ENCODE measurements at regions of chr3 and their contacts with region 1.

Region 1: DNA sequence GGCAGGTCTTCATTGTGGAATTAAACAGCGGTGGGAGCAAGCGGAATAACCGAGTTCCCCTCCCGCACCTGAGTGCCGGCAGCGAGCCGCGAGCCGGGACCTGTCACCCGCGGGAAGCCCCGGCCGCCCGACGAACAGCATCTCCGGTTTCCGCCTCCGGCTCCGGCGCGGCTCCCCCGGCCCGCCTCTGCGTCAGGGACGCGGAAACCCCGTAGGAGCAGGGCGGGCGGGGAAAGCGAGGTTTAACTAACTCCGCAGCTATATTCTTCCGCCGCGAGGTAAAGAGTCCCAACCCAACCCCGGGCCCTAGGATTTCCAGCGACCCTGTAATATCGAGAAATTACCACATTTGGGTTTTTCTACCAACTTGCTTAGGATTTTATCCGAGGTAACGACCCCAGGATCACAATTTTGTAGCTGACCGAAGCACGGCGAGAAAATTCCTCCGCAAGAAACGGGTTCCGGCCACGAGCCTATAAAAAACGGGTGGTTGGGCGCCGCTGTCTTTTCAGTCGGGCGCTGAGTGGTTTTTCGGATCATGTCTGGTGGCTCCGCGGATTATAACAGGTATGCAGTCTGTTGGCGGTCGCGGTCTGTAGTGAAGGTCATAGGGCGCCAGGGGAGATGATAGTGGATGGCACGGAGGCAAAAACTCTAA is at the start of gene EIF4A2:
- DNase-seq: peak; percentile 84 to 96 (median 89)
- ATAC-seq: peak; percentile 68
- H3K4me3 ChIP-seq: peak within 1 kb of the TSS; percentile 92
- H3K4me3 Mint-ChIP-seq: peak within 1 kb of the TSS; percentile 95
- H3K27ac ChIP-seq: peak within 1 kb of the TSS; percentile 96 to 99
- H3K27ac Mint-ChIP-seq: peak within 1 kb of the TSS; percentile 96
- H3K4me1 ChIP-seq: peaks cover 32% of the 10 kb centered on the region
- H3K4me1 Mint-ChIP-seq: peaks cover 59% of the 10 kb centered on the region
- H3K27me3 ChIP-seq: no peaks in the 10 kb centered on the region
- H3K27me3 Mint-ChIP-seq: peaks cover 5% of the 10 kb centered on the region
- CTCF ChIP-seq: no peak
- total RNA-seq, gene EIF4A2: 1,039 to 1,046 TPM

Region 2: GRCh38 chr3:185021256-185021655 is 1761.9 kb before region 1 on chr3:
- CTCF ChIA-PET with region 1: no interaction called
- POLR2A ChIA-PET with region 1: no interaction called
- intact Hi-C with region 1: no loop called
- DNase-seq: no peak
- ATAC-seq: no peak
- H3K4me3 ChIP-seq: no peak overlapping the region
- H3K4me3 Mint-ChIP-seq: no peak overlapping the region
- H3K27ac ChIP-seq: no peak overlapping the region
- H3K27ac Mint-ChIP-seq: no peak overlapping the region
- H3K4me1 ChIP-seq: no peaks in the 10 kb centered on the region
- H3K4me1 Mint-ChIP-seq: no peaks in the 10 kb centered on the region
- H3K27me3 ChIP-seq: no peaks in the 10 kb centered on the region
- H3K27me3 Mint-ChIP-seq: no peaks in the 10 kb centered on the region
- CTCF ChIP-seq: no peak

Region 3: GRCh38 chr3:185645596-185646381 is 1137.4 kb before region 1 on chr3:
- CTCF ChIA-PET with region 1: no interaction called
- POLR2A ChIA-PET with region 1: no interaction called
- intact Hi-C with region 1: no loop called
- DNase-seq: no peak
- ATAC-seq: no peak
- H3K4me3 ChIP-seq: no peak overlapping the region
- H3K4me3 Mint-ChIP-seq: no peak overlapping the region
- H3K27ac ChIP-seq: no peak overlapping the region
- H3K27ac Mint-ChIP-seq: no peak overlapping the region
- H3K4me1 ChIP-seq: no peaks in the 10 kb centered on the region
- H3K4me1 Mint-ChIP-seq: no peaks in the 10 kb centered on the region
- H3K27me3 ChIP-seq: no peaks in the 10 kb centered on the region
- H3K27me3 Mint-ChIP-seq: peaks cover 20% of the 10 kb centered on the region
- CTCF ChIP-seq: no peak

Region 4: GRCh38 chr3:186570096-186570940 is 212.9 kb before region 1 on chr3 and contains the start of gene DNAJB11:
- CTCF ChIA-PET with region 1: no interaction called
- POLR2A ChIA-PET with region 1: interaction called, 58 read pairs
- intact Hi-C with region 1: loop called (anchors 2 kb)
- DNase-seq: peak; percentile 91 to 100 (median 97)
- ATAC-seq: peak; percentile 83
- H3K4me3 ChIP-seq: peak within 1 kb of the TSS; percentile 79
- H3K4me3 Mint-ChIP-seq: peak within 1 kb of the TSS; percentile 99
- H3K27ac ChIP-seq: peak within 1 kb of the TSS; percentile 90 to 94
- H3K27ac Mint-ChIP-seq: peak within 1 kb of the TSS; percentile 94
- H3K4me1 ChIP-seq: peaks cover 37% of the 10 kb centered on the region
- H3K4me1 Mint-ChIP-seq: peaks cover 69% of the 10 kb centered on the region
- H3K27me3 ChIP-seq: no peaks in the 10 kb centered on the region
- H3K27me3 Mint-ChIP-seq: no peaks in the 10 kb centered on the region
- CTCF ChIP-seq: no peak
- total RNA-seq, gene DNAJB11: 69.3 to 70.3 TPM

Region 5: DNA sequence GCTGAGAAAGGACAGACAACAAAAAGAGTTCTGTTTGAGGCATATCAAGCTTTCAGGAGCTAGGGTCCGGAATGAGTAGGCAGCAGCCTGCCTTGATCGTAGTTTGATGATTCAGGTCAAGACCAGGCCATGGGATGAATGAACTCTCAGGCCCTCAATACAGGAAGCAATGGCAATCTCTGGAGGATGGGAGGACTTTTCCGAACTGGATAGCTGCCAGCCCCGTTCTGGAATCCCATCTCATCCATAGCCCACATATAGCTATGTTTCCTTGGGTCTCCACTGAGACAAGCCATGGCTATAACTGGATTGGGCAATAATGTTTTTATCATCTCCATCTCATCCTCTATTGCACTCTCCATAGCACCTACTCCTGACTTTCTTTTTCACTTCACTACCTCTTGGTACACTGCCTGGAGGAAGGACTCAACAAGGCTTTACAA is 157.6 kb before region 1 on chr3:
- CTCF ChIA-PET with region 1: no interaction called
- POLR2A ChIA-PET with region 1: no interaction called
- intact Hi-C with region 1: no loop called
- DNase-seq: no peak
- ATAC-seq: no peak
- H3K4me3 ChIP-seq: no peak overlapping the region
- H3K4me3 Mint-ChIP-seq: no peak overlapping the region
- H3K27ac ChIP-seq: no peak overlapping the region
- H3K27ac Mint-ChIP-seq: no peak overlapping the region
- H3K4me1 ChIP-seq: no peaks in the 10 kb centered on the region
- H3K4me1 Mint-ChIP-seq: no peaks in the 10 kb centered on the region
- H3K27me3 ChIP-seq: peaks cover 0 to 4% of the 10 kb centered on the region in 2 experiments
- H3K27me3 Mint-ChIP-seq: peaks cover 25% of the 10 kb centered on the region
- CTCF ChIP-seq: no peak

Region 6: DNA sequence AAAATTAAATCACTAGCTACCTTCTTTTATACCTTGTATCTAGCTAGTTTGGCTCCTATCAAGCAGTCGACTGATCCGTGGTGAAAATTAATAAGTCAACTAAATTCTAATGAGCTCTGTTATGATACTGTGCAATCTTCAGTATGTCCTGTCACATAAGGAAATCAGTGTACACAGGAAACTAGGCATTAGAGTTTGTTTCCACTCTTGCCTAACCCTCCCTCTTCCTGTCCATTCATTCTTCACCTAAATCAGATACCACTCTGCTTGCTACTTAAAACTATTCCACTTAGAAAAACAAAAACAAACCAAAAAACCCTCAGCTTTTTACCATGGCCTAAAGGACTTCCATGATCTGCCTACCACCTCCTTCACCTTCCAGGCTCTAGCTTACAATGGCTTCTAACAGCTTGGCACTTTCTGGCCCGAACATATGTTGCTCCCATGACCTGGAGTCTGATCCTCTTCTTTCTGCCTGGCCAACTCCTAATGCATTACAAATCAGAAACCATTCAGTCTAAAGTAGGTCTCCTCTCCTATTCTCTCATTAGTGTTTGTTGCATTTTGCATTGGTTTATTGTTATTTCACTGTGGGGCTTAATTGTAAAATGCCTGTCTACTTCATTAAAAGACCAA is 15.2 kb after region 1 on chr3:
- CTCF ChIA-PET with region 1: interaction called, 3 read pairs
- POLR2A ChIA-PET with region 1: interaction called, 40 read pairs
- intact Hi-C with region 1: no loop called
- DNase-seq: no peak
- ATAC-seq: no peak
- H3K4me3 ChIP-seq: no peak overlapping the region
- H3K4me3 Mint-ChIP-seq: no peak overlapping the region
- H3K27ac ChIP-seq: no peak overlapping the region
- H3K27ac Mint-ChIP-seq: no peak overlapping the region
- H3K4me1 ChIP-seq: peaks cover 5% of the 10 kb centered on the region
- H3K4me1 Mint-ChIP-seq: peaks cover 16% of the 10 kb centered on the region
- H3K27me3 ChIP-seq: no peaks in the 10 kb centered on the region
- H3K27me3 Mint-ChIP-seq: no peaks in the 10 kb centered on the region
- CTCF ChIP-seq: no peak

Region 7: DNA sequence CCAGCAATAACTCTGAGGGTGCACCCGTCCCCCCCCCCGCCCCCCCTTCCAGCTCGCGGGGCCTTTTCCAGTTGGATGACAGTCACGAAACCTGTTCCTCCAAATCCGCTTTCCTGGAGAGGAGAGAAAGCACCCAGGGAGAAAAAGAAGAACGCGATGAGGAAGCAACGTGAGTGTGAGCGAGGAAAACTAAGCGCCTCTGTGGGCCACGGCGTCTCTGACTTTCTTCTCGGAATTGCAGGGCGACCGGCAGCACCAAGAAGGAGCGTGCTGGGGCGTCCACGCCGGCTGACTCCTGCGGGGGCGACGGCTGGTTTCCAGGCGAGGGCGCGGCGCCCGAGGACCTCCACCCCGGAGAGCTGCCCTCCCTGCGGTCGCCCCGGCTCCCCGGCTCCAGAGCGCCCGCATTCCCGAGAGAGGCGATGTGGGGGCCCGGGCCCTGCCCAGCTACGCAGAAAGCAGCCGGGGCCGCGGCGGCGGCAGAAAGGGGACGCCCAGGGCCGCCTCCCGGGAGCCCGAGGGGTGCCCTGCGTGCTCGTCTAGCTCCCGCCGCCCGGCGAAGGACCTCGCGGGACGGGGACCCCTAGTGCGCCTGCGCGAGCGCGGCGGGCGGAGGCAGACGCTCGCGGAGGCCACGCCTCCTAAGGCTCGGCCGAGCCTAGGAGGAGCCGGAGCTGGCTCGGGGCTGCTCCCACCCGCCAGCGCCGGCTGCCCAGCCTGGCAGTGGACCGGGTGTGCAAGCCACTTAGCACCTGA is 44.0 kb after region 1 on chr3:
- CTCF ChIA-PET with region 1: interaction called, 3 read pairs
- POLR2A ChIA-PET with region 1: interaction called, 69 read pairs
- intact Hi-C with region 1: loop called in 1 of 2 experiments (anchors 5 kb)
- DNase-seq: peak; percentile 68 to 96 (median 82)
- ATAC-seq: peak; percentile 92
- H3K4me3 ChIP-seq: peak overlapping the region; percentile 60
- H3K4me3 Mint-ChIP-seq: peak overlapping the region; percentile 76
- H3K27ac ChIP-seq: no peak overlapping the region
- H3K27ac Mint-ChIP-seq: no peak overlapping the region
- H3K4me1 ChIP-seq: peaks cover 27% of the 10 kb centered on the region
- H3K4me1 Mint-ChIP-seq: peaks cover 23% of the 10 kb centered on the region
- H3K27me3 ChIP-seq: peaks cover 37 to 65% of the 10 kb centered on the region in 2 experiments
- H3K27me3 Mint-ChIP-seq: peaks cover 65% of the 10 kb centered on the region
- CTCF ChIP-seq: no peak

Region 8: GRCh38 chr3:186920301-186920700 is 137.1 kb after region 1 on chr3:
- CTCF ChIA-PET with region 1: no interaction called
- POLR2A ChIA-PET with region 1: no interaction called
- intact Hi-C with region 1: no loop called
- DNase-seq: no peak
- ATAC-seq: no peak
- H3K4me3 ChIP-seq: no peak overlapping the region
- H3K4me3 Mint-ChIP-seq: no peak overlapping the region
- H3K27ac ChIP-seq: no peak overlapping the region
- H3K27ac Mint-ChIP-seq: no peak overlapping the region
- H3K4me1 ChIP-seq: peaks cover 19% of the 10 kb centered on the region
- H3K4me1 Mint-ChIP-seq: peaks cover 26% of the 10 kb centered on the region
- H3K27me3 ChIP-seq: no peaks in the 10 kb centered on the region
- H3K27me3 Mint-ChIP-seq: no peaks in the 10 kb centered on the region
- CTCF ChIP-seq: no peak

Region 9: GRCh38 chr3:187025656-187026316 is 242.6 kb after region 1 on chr3:
- CTCF ChIA-PET with region 1: no interaction called
- POLR2A ChIA-PET with region 1: interaction called, 50 read pairs
- intact Hi-C with region 1: no loop called
- DNase-seq: peak in 9 of 14 experiments; percentile 28 to 64 (median 38)
- ATAC-seq: peak; percentile 2
- H3K4me3 ChIP-seq: peak overlapping the region; percentile 72
- H3K4me3 Mint-ChIP-seq: peak overlapping the region; percentile 89
- H3K27ac ChIP-seq: peak overlapping the region; percentile 72 to 87
- H3K27ac Mint-ChIP-seq: peak overlapping the region; percentile 98
- H3K4me1 ChIP-seq: peaks cover 62% of the 10 kb centered on the region
- H3K4me1 Mint-ChIP-seq: peaks cover 69% of the 10 kb centered on the region
- H3K27me3 ChIP-seq: no peaks in the 10 kb centered on the region
- H3K27me3 Mint-ChIP-seq: no peaks in the 10 kb centered on the region
- CTCF ChIP-seq: no peak

Measured in CD4-positive, alpha-beta T cell (primary cell).